Activated CD4-positive, alpha-beta T cell treated with anti-CD3 and anti-CD28 coated beads, Interleukin-2, amount 10 ng/mL, durations not matched to agents 24 days and 14 days (primary cell): ENCODE measurements at regions of chr4 and their contacts with region 1.

Region 1: DNA sequence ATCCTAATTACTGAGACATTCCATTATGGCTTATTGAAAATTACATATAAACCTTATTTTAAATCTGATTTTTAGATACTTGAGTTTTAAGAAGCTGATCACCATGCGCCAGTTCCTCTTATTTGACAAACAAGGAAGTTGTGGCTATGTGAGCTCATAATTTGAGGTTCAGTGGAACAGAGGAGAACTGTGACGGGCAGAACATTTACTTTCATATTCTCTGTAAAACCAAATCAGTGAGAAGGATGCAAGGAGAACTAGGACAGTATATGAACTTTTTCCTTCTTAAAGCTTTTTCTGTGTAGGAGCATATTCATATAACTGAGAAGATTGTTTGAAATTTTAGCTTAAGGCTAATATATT is 25.3 kb downstream of the STIM2 start:
- DNase-seq: peak; percentile 87
- H3K4me3 Mint-ChIP-seq: peak overlapping the region; percentile 72
- H3K27ac Mint-ChIP-seq: peak overlapping the region; percentile 87
- H3K4me1 Mint-ChIP-seq: peaks cover 53% of the 10 kb centered on the region
- H3K27me3 Mint-ChIP-seq: no peaks in the 10 kb centered on the region

Region 2: GRCh38 chr4:25938787-25939186 is 947.1 kb before region 1 on chr4:
- intact Hi-C with region 1: loop called (anchors 1 kb)
- DNase-seq: peak; percentile 65
- H3K4me3 Mint-ChIP-seq: peak overlapping the region; percentile 20
- H3K27ac Mint-ChIP-seq: peak overlapping the region; percentile 89
- H3K4me1 Mint-ChIP-seq: peaks cover 26% of the 10 kb centered on the region
- H3K27me3 Mint-ChIP-seq: peaks cover 5% of the 10 kb centered on the region

Region 3: GRCh38 chr4:26873391-26874026 is 12.4 kb before region 1 on chr4:
- intact Hi-C with region 1: loop called (anchors 1 kb)
- DNase-seq: peak; percentile 86
- H3K4me3 Mint-ChIP-seq: peak overlapping the region; percentile 46
- H3K27ac Mint-ChIP-seq: peak overlapping the region; percentile 79
- H3K4me1 Mint-ChIP-seq: peaks cover 59% of the 10 kb centered on the region
- H3K27me3 Mint-ChIP-seq: no peaks in the 10 kb centered on the region

Region 4: GRCh38 chr4:26907731-26908599 is 22.1 kb after region 1 on chr4:
- intact Hi-C with region 1: loop called (anchors 1 kb)
- DNase-seq: no peak
- H3K4me3 Mint-ChIP-seq: peak overlapping the region; percentile 37
- H3K27ac Mint-ChIP-seq: peak overlapping the region; percentile 81
- H3K4me1 Mint-ChIP-seq: peaks cover 55% of the 10 kb centered on the region
- H3K27me3 Mint-ChIP-seq: no peaks in the 10 kb centered on the region

Region 5: GRCh38 chr4:26992657-26993361 is 106.9 kb after region 1 on chr4:
- intact Hi-C with region 1: loop called (anchors 1 kb)
- DNase-seq: peak; percentile 68
- H3K4me3 Mint-ChIP-seq: no peak overlapping the region
- H3K27ac Mint-ChIP-seq: no peak overlapping the region
- H3K4me1 Mint-ChIP-seq: peaks cover 28% of the 10 kb centered on the region
- H3K27me3 Mint-ChIP-seq: no peaks in the 10 kb centered on the region